ENCODE measurements at regions of chr3 and their contacts with region 1.

Region 1: GRCh38 chr3:181700168-181701087 is 11.3 kb upstream of the SOX2 start:
- DNase-seq: no peak
- H3K4me3 ChIP-seq: no peak overlapping the region
- H3K27me3 ChIP-seq: peaks cover 34% of the 10 kb centered on the region
- CTCF ChIP-seq: peak; percentile 85

Region 2: DNA sequence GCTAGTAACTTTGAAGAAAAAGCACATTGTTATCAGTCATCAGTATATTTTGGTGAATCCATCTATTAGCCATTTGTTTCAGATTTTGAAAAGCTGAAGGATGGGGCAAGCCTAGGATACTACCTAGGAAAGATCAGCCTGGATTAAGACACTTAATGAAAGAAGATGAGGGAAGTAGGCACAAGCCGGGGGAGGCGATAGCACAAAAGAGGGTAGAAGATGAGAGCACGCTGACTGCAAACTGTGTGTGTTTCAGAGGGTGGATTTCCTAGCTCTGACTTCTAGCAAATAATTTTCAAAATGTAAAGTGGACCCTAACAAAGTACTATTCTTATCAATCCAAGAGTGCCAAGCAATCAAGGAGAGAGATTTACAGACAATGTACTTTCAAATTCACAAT is 10.9 kb before region 1 on chr3:
- CTCF ChIA-PET with region 1: interaction called, 16 read pairs
- POLR2A ChIA-PET with region 1: no interaction called
- DNase-seq: no peak
- H3K4me3 ChIP-seq: no peak overlapping the region
- H3K27me3 ChIP-seq: no peaks in the 10 kb centered on the region
- CTCF ChIP-seq: no peak

Region 3: GRCh38 chr3:181718987-181719911 is 18.8 kb after region 1 on chr3:
- CTCF ChIA-PET with region 1: interaction called, 13 read pairs
- POLR2A ChIA-PET with region 1: no interaction called
- DNase-seq: no peak
- H3K4me3 ChIP-seq: no peak overlapping the region
- H3K27me3 ChIP-seq: peaks cover 34% of the 10 kb centered on the region
- CTCF ChIP-seq: no peak

Measured in BJ (cell line).